ENCODE measurements at regions of chr3 and their contacts with region 1.

Region 1: DNA sequence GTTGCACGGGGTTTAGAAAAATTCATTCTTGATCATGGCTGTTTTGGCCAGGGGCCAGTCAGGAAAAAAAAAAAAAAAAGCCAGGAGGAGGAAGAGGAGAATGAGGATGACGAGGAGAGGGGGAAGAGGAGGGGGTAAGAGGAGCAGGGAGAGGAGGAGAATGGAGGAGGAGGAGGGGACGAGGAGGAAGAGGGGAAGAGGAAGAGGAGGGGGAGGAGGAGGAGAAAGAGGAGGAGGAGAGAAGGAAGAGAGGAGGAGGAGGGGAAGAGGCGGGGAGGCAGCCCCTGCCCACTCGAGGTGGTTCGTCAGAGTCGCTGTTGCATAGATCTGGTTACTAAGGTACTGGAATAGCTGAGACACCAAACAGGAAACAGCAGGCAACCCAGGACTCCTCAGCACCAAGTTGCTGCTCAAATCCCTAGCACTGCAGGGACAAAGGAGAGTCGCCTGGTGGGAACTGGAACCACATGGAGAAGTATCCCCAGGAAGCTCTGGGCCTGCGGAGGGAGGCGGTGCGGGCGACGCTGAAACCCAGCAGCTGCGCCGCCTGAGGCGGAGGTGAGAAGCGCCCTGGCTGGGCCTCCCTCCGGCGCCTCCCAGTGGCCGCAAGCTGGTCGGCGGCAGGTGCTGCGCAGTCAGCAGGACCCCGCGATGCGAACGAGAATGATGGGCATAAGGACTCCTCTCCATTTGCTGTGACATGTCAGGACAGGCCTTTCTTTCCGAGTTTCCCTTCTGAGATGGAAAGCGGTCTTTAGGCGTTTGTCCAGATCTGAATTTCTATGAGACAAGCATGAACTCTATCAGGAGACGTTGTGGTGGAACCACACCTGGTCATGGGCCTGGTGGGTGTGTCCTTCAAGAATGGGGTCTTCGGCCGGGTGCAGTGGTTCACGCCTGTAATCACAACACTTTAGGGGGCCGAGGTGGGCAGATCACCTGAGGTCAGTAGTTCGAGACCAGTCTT is 17.5 kb downstream of the FAM240A start:
- DNase-seq: peak; percentile 81
- H3K4me3 ChIP-seq: no peak overlapping the region
- H3K27ac ChIP-seq: no peak overlapping the region
- H3K4me1 ChIP-seq: no peaks in the 10 kb centered on the region
- H3K27me3 ChIP-seq: no peaks in the 10 kb centered on the region
- CTCF ChIP-seq: peak; percentile 86

Region 2: GRCh38 chr3:45306406-45307008 is 1323.3 kb before region 1 on chr3:
- CTCF ChIA-PET with region 1: interaction called, 11 read pairs
- POLR2A ChIA-PET with region 1: no interaction called
- intact Hi-C with region 1: no loop called
- DNase-seq: no peak
- H3K4me3 ChIP-seq: no peak overlapping the region
- H3K27ac ChIP-seq: no peak overlapping the region
- H3K4me1 ChIP-seq: no peaks in the 10 kb centered on the region
- H3K27me3 ChIP-seq: no peaks in the 10 kb centered on the region
- CTCF ChIP-seq: no peak

Region 3: DNA sequence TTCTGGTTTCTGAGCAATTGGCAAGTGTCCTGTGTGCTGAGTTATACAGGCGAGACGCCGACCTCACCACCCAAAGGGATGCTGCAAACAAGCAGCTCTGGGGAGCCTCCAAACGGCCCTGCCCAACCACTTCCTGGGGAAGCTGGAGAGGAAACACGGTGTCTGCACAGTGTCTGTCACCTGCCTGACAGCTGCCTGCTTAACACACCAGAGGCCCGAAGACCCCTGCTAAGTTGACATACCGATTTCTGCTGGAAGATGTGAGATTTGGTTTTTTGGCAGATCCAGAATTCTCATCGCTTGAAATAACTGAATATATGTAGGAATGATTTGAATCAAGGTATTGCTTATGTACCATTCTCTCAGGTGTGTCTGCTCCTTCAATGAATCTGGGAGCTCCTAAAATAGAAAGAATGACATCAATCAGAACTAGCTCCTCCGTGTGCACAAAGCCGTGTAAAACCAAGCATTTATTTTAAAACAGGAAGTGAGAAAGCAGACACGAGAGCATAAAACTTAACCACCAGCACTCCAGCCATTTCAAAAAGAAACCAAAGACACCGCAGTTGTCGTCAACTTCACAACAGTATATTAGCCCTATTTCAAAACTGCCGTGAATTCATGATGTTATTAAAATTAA is 90.9 kb before region 1 on chr3:
- CTCF ChIA-PET with region 1: no interaction called
- POLR2A ChIA-PET with region 1: no interaction called
- intact Hi-C with region 1: no loop called
- DNase-seq: peak; percentile 44
- H3K4me3 ChIP-seq: no peak overlapping the region
- H3K27ac ChIP-seq: no peak overlapping the region
- H3K4me1 ChIP-seq: no peaks in the 10 kb centered on the region
- H3K27me3 ChIP-seq: no peaks in the 10 kb centered on the region
- CTCF ChIP-seq: no peak